ENCODE measurements at regions of chr13 and their contacts with region 1.

Region 1: GRCh38 chr13:27533155-27533643 is 82.8 kb upstream of the MTIF3 start:
- DNase-seq: peak; percentile 93

Region 2: DNA sequence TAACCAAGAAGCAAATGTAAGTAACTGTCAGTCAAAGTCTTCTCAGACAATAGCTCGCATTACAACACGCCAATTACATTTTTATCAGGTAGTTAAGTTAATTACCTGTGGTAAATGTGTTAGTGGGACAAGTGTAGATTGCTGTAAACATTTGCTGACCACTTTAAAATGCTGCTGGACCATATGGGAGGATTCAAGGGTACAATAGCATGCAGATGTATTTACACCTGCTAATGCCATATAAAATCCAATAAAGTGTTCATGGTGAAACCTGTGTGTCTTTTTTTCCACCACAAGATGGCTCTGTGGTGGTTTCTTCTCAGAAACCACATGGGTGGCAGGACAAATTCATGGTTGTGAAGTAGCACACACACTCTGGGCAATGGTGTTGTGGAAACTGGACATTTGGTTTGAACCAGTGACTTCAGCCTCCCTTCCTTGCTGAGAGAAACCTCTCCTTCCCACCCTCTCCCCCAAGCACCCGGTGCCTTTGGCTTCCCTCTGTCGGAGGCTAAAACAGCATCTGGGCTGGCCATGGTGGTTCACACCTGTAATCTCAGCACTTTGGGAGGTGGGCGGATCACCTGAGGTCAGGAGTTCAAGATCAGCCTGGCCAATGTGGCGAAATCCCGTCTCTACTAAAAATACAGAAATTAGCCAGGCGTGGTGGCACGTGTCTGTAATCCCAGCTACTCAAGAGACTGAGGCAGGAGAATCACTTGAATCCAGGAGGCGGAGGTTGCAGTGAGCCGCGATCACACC is 126.8 kb before region 1 on chr13:
- intact Hi-C with region 1: loop called (anchors 10 kb)
- DNase-seq: no peak

Region 3: DNA sequence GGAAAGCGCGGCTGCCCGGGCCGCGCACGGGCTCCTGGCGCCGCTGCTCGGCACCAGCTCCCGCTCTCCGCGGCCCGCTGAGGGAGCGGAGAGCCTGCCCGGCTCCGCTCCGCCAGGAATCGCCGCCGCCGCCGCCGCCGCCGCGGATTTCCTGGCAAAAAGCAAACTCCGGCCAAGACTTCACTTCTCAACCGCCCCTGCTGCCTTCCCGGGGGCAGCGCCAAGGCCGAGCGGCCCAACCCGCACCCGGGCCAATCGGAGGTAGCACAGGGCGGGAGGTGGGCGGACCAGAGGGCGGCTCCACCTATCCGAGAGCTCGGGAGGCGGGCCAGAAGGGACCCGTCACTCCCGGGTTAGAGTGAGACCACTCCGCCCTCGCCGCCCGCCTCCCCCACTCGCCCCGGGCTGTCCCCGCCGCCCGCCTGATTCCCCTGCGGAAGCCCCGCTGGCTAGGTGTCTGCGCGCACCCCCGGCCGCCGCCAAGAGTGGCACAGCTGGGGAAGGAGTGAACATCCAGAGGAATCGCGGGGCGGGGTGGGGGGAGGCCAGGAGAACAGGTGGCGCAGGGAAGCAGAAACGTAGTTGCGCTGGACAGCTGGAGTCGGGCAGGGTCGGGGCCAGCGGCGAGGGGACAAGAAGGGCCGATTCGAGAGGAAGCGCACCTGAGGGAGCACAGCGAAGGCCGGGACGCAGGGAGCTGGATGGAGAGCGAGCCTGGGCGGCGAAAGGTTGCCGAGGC is 87.3 kb after region 1 on chr13 and contains the start of gene LNX2:
- intact Hi-C with region 1: loop called (anchors 5 kb)
- DNase-seq: peak; percentile 99
- total RNA-seq, gene LNX2: 15.8 TPM

Region 4: DNA sequence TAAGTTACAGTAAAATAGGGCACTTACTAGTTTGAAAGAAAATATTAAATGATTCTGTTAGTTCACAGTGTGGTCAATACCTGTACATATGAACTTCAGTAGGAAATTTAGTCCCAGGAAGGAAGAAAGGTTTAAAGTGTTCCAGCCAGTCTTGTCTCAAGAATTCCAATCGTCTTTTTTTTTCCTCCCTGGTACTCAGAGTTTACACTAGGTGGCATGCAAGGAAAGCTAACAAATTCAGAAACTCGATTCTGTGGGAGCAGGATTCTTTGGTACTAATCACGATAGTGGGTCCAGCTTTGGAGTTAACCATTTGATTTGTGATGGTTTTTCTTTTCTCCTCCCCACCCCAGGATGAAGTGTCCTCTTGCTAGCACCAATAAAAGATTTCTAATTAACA is 132.1 kb after region 1 on chr13:
- intact Hi-C with region 1: loop called (anchors 10 kb)
- DNase-seq: no peak

Region 5: DNA sequence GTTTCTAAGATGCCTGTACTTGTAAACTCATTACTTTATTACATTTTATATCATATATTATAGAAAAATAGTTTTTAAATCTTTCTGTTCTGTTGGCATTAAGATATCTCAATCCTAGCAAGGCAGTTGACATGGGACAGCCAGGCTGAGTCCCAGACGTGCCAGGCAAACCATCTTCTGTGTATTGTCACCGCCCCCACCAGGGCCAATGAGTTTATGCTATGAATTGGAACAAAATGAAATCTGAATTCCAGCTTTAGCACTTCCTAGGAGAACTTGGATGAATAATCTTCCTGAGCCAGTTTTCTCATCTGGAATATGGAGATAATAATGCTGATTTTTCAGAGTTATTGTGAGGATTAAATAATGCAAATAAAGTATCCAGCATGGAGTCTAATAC is 179.2 kb after region 1 on chr13:
- intact Hi-C with region 1: loop called (anchors 5 kb)
- DNase-seq: no peak

Region 6: GRCh38 chr13:27826379-27827353 is 293.5 kb after region 1 on chr13:
- intact Hi-C with region 1: loop called (anchors 5 kb)
- DNase-seq: peak; percentile 85